AG04449 (cell line): ENCODE measurements at regions of chr17 and their contacts with region 1.

Region 1: GRCh38 chr17:48259694-48260291 is 152.2 kb downstream of the SNX11 start:
- DNase-seq: no peak
- H3K4me3 ChIP-seq: no peak overlapping the region
- CTCF ChIP-seq: peak; percentile 43

Region 2: DNA sequence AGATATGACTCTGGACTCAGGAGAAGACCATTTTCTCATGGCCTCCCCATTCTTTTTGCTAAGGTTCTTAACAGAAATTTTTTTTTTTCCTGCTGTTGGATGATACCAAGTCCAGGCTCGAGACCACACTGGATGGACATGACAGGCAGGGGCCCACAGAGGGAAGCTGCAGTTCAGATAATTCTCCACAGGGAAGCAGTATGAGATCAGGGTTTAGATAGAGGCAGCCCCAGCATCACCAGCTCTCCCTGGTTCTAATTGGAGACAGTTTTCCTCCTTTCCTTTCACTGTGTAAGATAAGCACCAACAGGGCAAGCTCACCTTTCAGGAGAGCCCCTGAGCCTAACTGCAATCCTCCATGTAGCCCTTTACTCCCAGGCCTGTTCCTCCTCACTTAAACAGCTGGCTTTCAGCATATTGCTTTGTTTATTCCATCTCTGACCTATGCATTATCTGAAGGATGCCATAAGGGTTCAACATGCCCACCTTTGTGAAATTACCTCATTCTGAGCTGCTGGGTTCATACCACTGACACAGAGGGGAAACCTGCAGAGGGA is 44.1 kb before region 1 on chr17:
- CTCF ChIA-PET with region 1: interaction called, 14 read pairs
- POLR2A ChIA-PET with region 1: no interaction called
- DNase-seq: no peak
- H3K4me3 ChIP-seq: no peak overlapping the region
- CTCF ChIP-seq: peak; percentile 57

Region 3: GRCh38 chr17:48270896-48271295 is 11.1 kb after region 1 on chr17:
- CTCF ChIA-PET with region 1: interaction called, 99 read pairs
- POLR2A ChIA-PET with region 1: no interaction called
- DNase-seq: no peak
- H3K4me3 ChIP-seq: no peak overlapping the region
- CTCF ChIP-seq: no peak

Region 4: GRCh38 chr17:48610282-48611211 is 350.8 kb after region 1 on chr17 and contains the start of gene HOXB7:
- CTCF ChIA-PET with region 1: interaction called, 28 read pairs
- POLR2A ChIA-PET with region 1: no interaction called
- DNase-seq: no peak
- H3K4me3 ChIP-seq: peak within 1 kb of the TSS; percentile 67
- CTCF ChIP-seq: no peak

Region 5: GRCh38 chr17:48625495-48626244 is 365.9 kb after region 1 on chr17:
- CTCF ChIA-PET with region 1: interaction called, 10 read pairs
- POLR2A ChIA-PET with region 1: no interaction called
- DNase-seq: no peak
- H3K4me3 ChIP-seq: peak overlapping the region; percentile 51
- CTCF ChIP-seq: no peak